ENCODE measurements at regions of chr3 and their contacts with region 1.

Region 1: GRCh38 chr3:69791919-69792399 is 52.7 kb downstream of the MITF start:
- DNase-seq: peak in 4 of 42 donors; percentile 10 to 62 (median 22)

Region 2: GRCh38 chr3:69240651-69241568 is 551.0 kb before region 1 on chr3:
- intact Hi-C with region 1: no loop called
- DNase-seq: no peak

Region 3: DNA sequence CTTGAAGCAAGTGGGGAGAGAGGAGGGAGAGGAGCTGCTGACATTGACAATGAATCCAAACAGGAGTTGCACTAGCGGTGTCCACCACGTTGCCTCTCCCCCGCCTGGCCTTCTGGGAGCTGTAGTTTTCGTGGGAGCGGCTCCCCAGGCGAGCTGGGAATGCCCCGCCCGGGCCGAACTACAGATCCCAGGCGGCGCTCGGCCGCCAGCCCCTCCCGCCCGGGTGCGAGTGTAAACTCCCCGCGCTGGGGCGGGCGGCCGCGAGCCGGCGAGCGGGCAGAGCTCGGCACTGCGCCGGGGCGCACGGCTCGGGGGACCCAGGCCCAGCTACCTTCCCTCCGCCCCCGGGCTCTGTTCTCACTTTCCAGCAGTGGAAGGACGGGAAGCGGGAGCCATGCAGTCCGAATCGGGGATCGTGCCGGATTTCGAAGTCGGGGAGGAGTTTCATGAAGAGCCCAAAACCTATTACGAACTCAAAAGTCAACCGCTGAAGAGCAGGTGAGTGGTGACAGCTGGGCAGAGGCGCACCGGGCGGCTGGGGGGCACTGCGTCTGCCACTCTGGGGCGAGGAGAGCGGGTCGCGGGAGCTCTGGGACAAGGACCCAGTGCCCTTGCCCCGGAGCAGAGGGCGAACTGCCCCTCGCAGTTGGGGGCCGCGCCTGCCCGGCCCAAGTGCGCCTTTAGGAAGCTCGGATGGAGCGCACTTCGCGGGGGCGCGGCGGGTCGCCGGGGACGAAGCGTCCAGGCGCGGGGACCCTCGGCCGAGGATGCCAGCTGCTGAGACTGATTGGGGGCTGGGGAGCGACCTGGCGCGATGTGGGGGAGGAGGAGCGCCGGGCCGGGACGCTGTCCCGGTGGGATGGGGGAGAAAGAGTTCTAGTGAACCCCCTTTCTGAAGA is 52.5 kb before region 1 on chr3 and contains the start of gene MITF:
- intact Hi-C with region 1: loop called (anchors 10 kb)
- DNase-seq: peak; percentile 86 to 98 (median 96)

Region 4: DNA sequence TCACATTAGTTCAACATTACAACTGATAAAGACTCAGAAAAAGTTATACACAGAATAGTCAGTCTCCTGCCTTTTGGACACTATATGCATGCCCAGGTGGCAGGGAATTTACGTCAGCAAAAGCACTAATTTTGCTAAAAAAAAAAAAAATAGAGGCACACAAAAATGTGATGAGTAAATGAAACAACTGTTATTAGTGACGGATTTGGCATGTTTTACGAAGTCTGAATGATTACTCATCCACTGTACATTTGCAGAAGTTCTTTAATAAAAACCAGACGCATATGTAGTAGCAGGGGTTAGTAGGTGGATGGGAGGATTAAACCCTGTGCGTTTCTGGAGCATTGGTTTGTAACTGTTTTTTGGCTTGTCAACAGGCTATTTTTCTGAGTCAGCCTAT is 46.3 kb after region 1 on chr3:
- intact Hi-C with region 1: no loop called
- DNase-seq: no peak

Region 5: GRCh38 chr3:69855436-69856162 is 63.6 kb after region 1 on chr3:
- intact Hi-C with region 1: loop called (anchors 10 kb)
- DNase-seq: peak in 1 of 42 donors; percentile 8

Region 6: GRCh38 chr3:69930564-69930963 is 138.6 kb after region 1 on chr3:
- intact Hi-C with region 1: no loop called
- DNase-seq: peak in 34 of 42 donors; percentile 24 to 82 (median 57)

Measured in head of caudate nucleus (tissue), 42 donors.